Activated CD4-positive, alpha-beta T cell treated with anti-CD3 and anti-CD28 coated beads for 36 hours (primary cell): ENCODE measurements at regions of chr5 and their contacts with region 1.

Region 1: DNA sequence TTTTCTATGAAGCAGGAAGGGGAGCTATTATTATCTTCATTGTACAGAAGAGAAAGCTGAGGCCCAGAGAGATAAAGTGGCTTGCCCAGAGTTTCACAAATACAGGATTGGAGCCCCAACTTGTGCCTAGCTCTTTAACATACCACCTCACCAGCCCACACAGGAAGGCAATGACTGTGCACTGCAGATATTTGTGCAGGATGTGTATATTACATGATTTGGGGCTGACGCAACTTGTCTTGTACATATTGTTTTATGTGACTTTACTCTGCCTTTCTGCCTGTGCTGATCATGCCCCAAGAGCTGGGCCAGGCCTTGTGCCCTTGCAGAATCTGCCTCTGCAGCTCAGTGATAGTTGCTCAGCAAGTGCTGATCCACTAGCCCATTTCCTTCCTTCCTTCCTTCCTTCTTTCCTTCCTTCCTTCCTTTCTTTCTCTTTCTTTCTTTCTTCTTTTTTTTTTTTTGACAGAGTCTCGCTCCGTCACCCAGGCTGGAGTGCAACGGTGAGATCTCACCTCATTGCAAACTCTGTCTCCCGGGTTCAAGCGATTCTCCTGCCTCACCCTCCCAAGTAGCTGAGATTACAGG is 106.6 kb upstream of the TBCA start:
- DNase-seq: peak; percentile 72
- ATAC-seq: peak; percentile 72
- H3K4me3 Mint-ChIP-seq: no peak overlapping the region
- H3K27ac Mint-ChIP-seq: peak overlapping the region; percentile 85
- H3K4me1 Mint-ChIP-seq: peaks cover 32% of the 10 kb centered on the region
- H3K27me3 Mint-ChIP-seq: peaks cover 18% of the 10 kb centered on the region

Region 2: DNA sequence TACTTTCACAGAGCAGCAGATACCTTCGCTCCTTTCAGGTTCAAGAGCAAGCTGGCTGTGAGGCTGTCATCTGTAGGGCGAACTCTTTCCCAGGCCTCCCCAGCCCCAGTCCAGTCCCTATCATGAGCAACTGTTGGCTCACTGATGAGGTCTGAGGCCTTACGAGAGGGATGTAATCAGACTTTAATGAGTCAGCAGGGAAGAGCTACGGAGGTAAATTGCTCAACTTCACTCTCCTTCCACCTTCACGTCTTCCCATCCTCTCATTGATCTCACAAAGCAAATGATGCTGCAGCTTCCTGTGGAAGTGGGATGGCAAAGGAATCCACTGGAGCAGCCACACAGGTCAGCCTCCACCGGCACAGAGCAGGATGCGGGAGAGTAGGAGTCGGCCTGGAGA is 24.0 kb after region 1 on chr5:
- CTCF ChIA-PET with region 1: no interaction called
- POLR2A ChIA-PET with region 1: no interaction called
- intact Hi-C with region 1: no loop called
- DNase-seq: no peak
- ATAC-seq: no peak
- H3K4me3 Mint-ChIP-seq: no peak overlapping the region
- H3K27ac Mint-ChIP-seq: no peak overlapping the region
- H3K4me1 Mint-ChIP-seq: no peaks in the 10 kb centered on the region
- H3K27me3 Mint-ChIP-seq: peaks cover 7% of the 10 kb centered on the region

Region 3: DNA sequence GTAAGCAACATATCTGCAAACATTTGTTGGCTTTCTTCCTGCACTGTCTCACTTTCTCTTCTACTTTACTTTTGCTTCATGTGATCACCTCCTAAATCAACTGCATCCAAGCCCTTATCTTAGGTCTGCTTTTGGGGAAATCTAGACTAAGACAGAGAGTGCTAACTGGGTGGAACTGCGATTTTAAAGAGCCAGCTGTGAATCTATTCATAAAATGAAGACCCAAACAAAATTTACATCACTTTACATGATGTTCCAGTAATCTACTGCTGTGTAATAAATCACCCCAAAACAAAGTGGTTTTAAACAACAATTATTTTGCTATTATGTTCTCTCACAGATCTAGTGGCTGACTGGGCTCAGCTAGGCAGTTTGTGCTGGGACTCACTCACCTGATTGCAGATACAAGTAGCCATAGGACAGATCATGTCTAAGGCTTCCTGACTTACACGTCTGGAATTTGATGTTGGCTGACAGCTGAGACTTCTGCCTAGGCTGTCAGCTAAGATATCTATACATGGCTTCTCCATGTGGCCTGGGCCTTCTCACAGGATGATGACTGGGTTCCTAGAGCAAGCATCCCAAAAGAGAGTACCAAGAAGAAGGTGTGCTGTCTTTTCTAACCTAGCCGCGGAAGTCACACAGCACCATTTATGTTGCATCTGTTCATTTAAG is 38.5 kb after region 1 on chr5:
- CTCF ChIA-PET with region 1: no interaction called
- POLR2A ChIA-PET with region 1: no interaction called
- intact Hi-C with region 1: no loop called
- DNase-seq: no peak
- ATAC-seq: no peak
- H3K4me3 Mint-ChIP-seq: no peak overlapping the region
- H3K27ac Mint-ChIP-seq: no peak overlapping the region
- H3K4me1 Mint-ChIP-seq: peaks cover 15% of the 10 kb centered on the region
- H3K27me3 Mint-ChIP-seq: peaks cover 3% of the 10 kb centered on the region

Region 4: GRCh38 chr5:77935506-77936364 is 53.0 kb after region 1 on chr5:
- CTCF ChIA-PET with region 1: no interaction called
- POLR2A ChIA-PET with region 1: interaction called, 3 read pairs
- intact Hi-C with region 1: loop called in 1 of 2 experiments (anchors 5 kb)
- DNase-seq: peak; percentile 61
- ATAC-seq: peak; percentile 91
- H3K4me3 Mint-ChIP-seq: peak overlapping the region; percentile 15
- H3K27ac Mint-ChIP-seq: peak overlapping the region; percentile 81
- H3K4me1 Mint-ChIP-seq: peaks cover 22% of the 10 kb centered on the region
- H3K27me3 Mint-ChIP-seq: peaks cover 8% of the 10 kb centered on the region